ENCODE measurements at regions of chr20 and their contacts with region 1.

Region 1: DNA sequence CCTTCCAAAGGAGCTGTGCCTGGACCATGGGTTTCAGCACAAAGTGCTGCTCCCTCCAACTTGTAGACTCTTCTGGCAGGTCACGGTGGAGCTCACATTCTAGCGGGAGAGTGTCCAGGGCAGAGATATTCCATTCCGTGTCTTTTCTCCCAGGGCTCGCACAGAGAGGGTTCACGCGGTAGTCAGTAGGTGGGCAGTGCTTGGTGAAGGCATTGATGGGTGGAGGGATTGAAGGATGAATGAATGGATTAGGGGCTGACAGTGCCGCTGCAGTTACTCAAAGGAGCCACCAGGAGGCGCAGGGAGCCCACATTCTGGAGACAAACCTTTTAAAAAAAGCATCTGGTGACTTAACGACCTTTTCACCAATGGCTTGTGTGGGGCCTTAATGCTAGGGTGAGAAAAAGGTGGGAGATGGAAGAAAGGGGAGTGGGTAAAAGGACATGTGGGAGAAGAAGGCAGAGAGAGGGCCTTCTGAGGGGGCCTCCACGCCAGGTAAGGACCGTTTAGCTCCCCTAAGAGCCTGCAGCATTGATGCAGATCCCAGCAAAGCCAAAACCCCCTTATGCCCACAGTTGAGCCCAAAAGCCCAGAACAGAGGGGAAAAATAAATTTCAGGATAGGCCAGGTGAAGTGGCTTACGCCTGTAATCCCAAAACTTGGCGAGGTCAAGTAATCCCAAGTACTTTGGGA is 17.5 kb upstream of the FAM110A start:
- DNase-seq: peak; percentile 73 to 75
- H3K4me3 ChIP-seq: no peak overlapping the region
- H3K4me3 Mint-ChIP-seq: no peak overlapping the region
- H3K27ac Mint-ChIP-seq: no peak overlapping the region
- H3K4me1 ChIP-seq: peaks cover 11% of the 10 kb centered on the region
- H3K4me1 Mint-ChIP-seq: peaks cover 8% of the 10 kb centered on the region
- H3K27me3 ChIP-seq: no peaks in the 10 kb centered on the region
- H3K27me3 Mint-ChIP-seq: no peaks in the 10 kb centered on the region
- CTCF ChIP-seq: peak; percentile 97 to 98

Region 2: GRCh38 chr20:884983-885952 is 69.2 kb after region 1 on chr20:
- CTCF ChIA-PET with region 1: no interaction called
- POLR2A ChIA-PET with region 1: no interaction called
- intact Hi-C with region 1: loop called (anchors 5 kb)
- DNase-seq: peak; percentile 38 to 53
- H3K4me3 ChIP-seq: no peak overlapping the region
- H3K4me3 Mint-ChIP-seq: no peak overlapping the region
- H3K27ac Mint-ChIP-seq: no peak overlapping the region
- H3K4me1 ChIP-seq: no peaks in the 10 kb centered on the region
- H3K4me1 Mint-ChIP-seq: no peaks in the 10 kb centered on the region
- H3K27me3 ChIP-seq: no peaks in the 10 kb centered on the region
- H3K27me3 Mint-ChIP-seq: peaks cover 11% of the 10 kb centered on the region
- CTCF ChIP-seq: peak in 1 of 2 experiments; percentile 0

Region 3: DNA sequence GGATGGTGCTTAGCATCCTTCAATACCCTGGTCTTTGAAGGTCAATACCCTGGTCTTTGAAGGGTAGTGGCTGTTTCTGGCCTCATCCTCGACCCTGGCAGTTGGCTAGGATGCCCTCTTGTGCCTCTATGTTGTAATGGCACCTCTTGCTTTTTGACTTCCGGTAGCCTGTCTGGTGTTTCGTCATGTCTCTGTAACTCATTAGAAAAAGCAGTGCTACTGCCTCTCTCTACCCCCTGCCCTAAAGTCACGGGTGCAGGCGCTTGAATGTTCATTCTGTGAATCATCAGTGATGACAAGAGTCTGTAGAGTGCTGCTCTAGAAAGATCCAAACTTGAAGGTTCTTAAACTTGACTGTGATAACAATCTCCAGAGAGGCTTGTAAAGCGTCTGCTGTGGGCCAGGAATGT is 157.7 kb after region 1 on chr20:
- CTCF ChIA-PET with region 1: interaction called, 4 read pairs
- POLR2A ChIA-PET with region 1: no interaction called
- intact Hi-C with region 1: loop called (anchors 5 kb)
- DNase-seq: peak; percentile 43 to 51
- H3K4me3 ChIP-seq: no peak overlapping the region
- H3K4me3 Mint-ChIP-seq: no peak overlapping the region
- H3K27ac Mint-ChIP-seq: no peak overlapping the region
- H3K4me1 ChIP-seq: no peaks in the 10 kb centered on the region
- H3K4me1 Mint-ChIP-seq: no peaks in the 10 kb centered on the region
- H3K27me3 ChIP-seq: no peaks in the 10 kb centered on the region
- H3K27me3 Mint-ChIP-seq: peaks cover 13% of the 10 kb centered on the region
- CTCF ChIP-seq: peak; percentile 31 to 33

Region 4: DNA sequence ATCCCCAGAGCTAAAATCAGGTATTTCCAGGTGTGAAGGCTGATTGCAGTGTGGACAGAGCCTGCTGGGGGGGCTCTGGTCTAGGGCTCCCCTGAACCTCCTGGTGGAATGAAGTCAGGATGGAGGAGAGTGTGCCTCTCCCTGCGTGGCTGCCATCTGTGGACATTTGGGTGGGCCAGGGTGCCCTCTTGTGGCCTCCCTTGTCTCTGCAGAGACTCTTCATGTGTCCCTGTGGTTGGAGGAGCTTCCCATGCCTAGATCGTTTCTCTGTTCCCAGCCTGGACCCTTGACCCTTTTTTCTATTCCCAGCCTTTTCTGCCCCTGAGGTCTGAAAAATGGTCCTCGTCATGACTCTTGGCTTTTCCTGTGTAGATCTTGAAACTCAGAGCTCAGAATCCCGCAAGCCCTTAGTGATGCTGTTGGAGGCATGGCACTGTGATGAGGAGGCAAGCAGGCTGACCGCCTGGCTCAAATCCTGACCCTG is 292.4 kb after region 1 on chr20:
- CTCF ChIA-PET with region 1: interaction called, 7 read pairs
- POLR2A ChIA-PET with region 1: no interaction called
- intact Hi-C with region 1: loop called (anchors 1 kb)
- DNase-seq: peak; percentile 59 to 68
- H3K4me3 ChIP-seq: no peak overlapping the region
- H3K4me3 Mint-ChIP-seq: no peak overlapping the region
- H3K27ac Mint-ChIP-seq: no peak overlapping the region
- H3K4me1 ChIP-seq: no peaks in the 10 kb centered on the region
- H3K4me1 Mint-ChIP-seq: no peaks in the 10 kb centered on the region
- H3K27me3 ChIP-seq: no peaks in the 10 kb centered on the region
- H3K27me3 Mint-ChIP-seq: peaks cover 11% of the 10 kb centered on the region
- CTCF ChIP-seq: peak; percentile 86

Region 5: GRCh38 chr20:1185790-1186334 is 369.8 kb after region 1 on chr20:
- CTCF ChIA-PET with region 1: no interaction called
- POLR2A ChIA-PET with region 1: no interaction called
- intact Hi-C with region 1: loop called (anchors 10 kb)
- DNase-seq: peak; percentile 81 to 85
- H3K4me3 ChIP-seq: peak overlapping the region; percentile 72
- H3K4me3 Mint-ChIP-seq: peak overlapping the region; percentile 75
- H3K27ac Mint-ChIP-seq: no peak overlapping the region
- H3K4me1 ChIP-seq: peaks cover 29% of the 10 kb centered on the region
- H3K4me1 Mint-ChIP-seq: no peaks in the 10 kb centered on the region
- H3K27me3 ChIP-seq: no peaks in the 10 kb centered on the region
- H3K27me3 Mint-ChIP-seq: no peaks in the 10 kb centered on the region
- CTCF ChIP-seq: peak; percentile 80 to 81

Measured in Caco-2 (cell line).